ENCODE measurements at regions of chr11 and their contacts with region 1.

Region 1: DNA sequence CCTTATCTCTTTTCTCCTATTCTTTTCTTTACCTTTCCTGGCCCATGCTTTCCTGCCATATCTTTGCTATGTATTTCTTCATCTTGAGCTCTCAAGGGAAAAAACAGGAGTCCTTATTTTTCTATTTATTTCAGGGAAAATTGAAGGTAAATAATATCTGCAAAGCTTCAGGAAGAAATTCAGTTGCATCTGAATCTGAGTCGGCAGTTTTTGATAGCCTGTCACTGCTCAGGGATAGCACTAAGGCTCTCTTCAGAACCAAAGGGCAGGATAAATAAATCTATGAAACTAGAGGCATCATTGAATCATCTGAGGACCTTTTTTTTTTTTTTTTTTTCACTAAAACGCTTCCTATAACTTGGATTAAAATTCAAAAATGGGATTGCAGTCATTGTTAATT is 288.9 kb downstream of the TMEM135 start:
- DNase-seq: no peak
- ATAC-seq: no peak
- H3K4me3 Mint-ChIP-seq: no peak overlapping the region
- H3K27ac Mint-ChIP-seq: no peak overlapping the region
- H3K4me1 Mint-ChIP-seq: no peaks in the 10 kb centered on the region
- H3K27me3 Mint-ChIP-seq: no peaks in the 10 kb centered on the region

Region 2: DNA sequence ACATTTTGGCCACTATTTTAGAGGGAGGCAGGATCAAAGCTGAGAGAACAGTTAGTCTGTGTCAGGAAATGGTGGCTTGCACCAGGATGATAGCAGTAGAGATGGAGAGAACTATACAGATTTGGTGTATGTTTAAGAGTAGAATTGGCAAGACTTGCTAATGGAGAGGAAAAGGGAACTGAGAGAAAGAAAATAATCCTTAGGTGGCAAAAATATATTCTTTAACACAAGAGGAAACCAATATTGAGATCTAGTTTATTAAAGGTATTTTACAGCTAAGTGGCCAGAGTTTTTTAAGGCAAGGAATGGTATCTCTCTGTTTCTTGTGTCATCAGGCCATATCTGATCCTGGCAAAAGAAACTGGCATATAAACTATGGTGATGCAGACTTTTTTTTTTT is 10.1 kb before region 1 on chr11:
- CTCF ChIA-PET with region 1: no interaction called
- POLR2A ChIA-PET with region 1: no interaction called
- intact Hi-C with region 1: no loop called
- DNase-seq: no peak
- ATAC-seq: no peak
- H3K4me3 Mint-ChIP-seq: no peak overlapping the region
- H3K27ac Mint-ChIP-seq: no peak overlapping the region
- H3K4me1 Mint-ChIP-seq: no peaks in the 10 kb centered on the region
- H3K27me3 Mint-ChIP-seq: no peaks in the 10 kb centered on the region

Region 3: GRCh38 chr11:87347854-87348253 is 21.3 kb after region 1 on chr11:
- CTCF ChIA-PET with region 1: interaction called, 4 read pairs
- POLR2A ChIA-PET with region 1: no interaction called
- intact Hi-C with region 1: loop called in 1 of 2 experiments (anchors 2 kb)
- DNase-seq: no peak
- ATAC-seq: no peak
- H3K4me3 Mint-ChIP-seq: no peak overlapping the region
- H3K27ac Mint-ChIP-seq: no peak overlapping the region
- H3K4me1 Mint-ChIP-seq: peaks cover 4% of the 10 kb centered on the region
- H3K27me3 Mint-ChIP-seq: peaks cover 8% of the 10 kb centered on the region